H1 (cell line): ENCODE measurements at regions of chr11 and their contacts with region 1.

Region 1: DNA sequence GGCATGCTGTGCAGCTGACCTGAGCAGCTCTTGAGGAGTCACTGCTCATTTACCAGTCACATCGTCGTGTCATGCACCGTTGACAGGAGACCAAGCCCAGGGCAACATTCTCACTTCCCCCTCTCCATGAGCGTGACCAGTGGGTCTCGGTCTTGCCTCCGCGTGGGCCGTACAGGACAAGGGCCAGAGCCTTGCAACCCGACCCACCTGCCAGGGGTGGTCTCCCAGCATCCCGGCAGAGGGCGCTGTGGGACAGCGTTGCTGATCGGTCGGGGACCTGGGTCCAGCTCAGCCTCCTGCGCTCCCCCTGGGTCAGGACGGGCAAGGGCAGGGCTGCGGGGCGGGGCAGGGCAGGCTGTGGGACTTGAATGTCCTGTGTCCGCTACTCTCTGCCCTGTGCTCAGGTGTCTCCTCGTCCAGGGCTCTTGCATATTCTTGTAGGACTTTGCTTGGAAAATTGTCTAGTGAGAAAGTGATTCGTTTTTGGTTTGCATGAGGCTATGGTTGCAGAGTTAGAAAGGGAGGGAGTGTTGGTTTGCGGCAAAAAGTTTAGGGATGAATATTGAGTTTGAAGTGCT is 16.2 kb downstream of the EIF4G2 start:
- DNase-seq: peak; percentile 77 to 99
- H3K4me3 ChIP-seq: no peak overlapping the region
- H3K27ac ChIP-seq: no peak overlapping the region
- H3K4me1 ChIP-seq: peaks cover 0 to 5% (median 2%) of the 10 kb centered on the region in 4 experiments; a peak in 2 of 7 replicates
- H3K27me3 ChIP-seq: peaks cover 0 to 2% (median 0%) of the 10 kb centered on the region in 4 experiments; a peak in 2 of 7 replicates
- CTCF ChIP-seq: peak; percentile 98 to 99 (median 98)
- EP300 ChIP-seq: no peak
- POLR2A ChIP-seq: no peak
- RAD21 ChIP-seq: peak; percentile 95 to 97

Region 2: DNA sequence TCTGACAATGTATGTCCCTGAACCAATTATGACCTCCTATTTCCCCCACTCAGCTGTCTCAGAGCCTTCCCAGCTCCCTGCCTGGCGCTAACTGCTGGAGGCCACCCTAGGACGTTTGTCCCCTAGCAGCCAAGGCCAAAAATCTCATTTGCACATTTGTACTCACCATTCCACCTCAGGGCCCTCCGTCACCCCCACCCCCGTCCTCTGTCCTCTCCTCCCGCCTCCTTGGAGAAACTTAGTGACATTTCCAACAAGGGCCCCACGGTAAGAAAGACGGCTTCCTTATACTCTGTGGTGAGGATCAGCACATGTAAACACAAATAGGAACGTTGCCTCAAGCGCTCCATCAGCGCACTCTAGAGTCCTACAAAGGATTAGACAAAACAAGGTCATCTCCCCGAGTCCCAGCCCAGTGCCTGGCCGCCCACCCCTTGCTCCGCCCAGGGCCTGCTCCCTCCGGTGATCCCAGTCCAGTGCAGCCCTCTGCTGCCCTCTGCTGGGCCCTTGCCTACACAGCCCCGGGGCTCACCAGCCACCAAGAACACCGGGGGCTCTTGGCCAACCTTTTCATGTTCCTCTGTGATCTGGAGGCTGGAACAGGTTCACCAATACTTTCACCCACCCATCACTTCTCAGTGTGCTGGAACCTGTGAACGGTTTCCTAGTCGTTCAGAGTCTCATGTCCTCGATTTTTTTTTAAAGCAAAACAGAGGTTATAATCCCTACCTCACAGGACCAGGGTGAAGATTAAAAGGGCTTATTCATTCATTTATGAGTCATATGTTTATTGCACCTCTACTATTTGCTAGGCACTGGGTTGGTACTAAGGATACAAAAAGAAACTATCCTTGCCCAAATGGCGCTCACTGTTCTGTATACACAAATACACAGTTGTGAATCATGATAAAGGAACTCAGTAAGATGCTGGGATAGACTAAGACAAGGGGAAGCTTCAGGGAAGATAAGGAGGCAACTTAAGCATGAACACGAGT is 56.7 kb before region 1 on chr11:
- CTCF ChIA-PET with region 1: no interaction called
- POLR2A ChIA-PET with region 1: no interaction called
- DNase-seq: peak; percentile 90 to 98
- H3K4me3 ChIP-seq: peak overlapping the region in 1 of 4 experiments; percentile 47; a peak in 4 of 8 replicates
- H3K27ac ChIP-seq: no peak overlapping the region
- H3K4me1 ChIP-seq: peaks cover 0 to 4% (median 3%) of the 10 kb centered on the region in 4 experiments; a peak in 4 of 7 replicates
- H3K27me3 ChIP-seq: no peaks in the 10 kb centered on the region; a peak in 1 of 7 replicates
- CTCF ChIP-seq: peak; percentile 85 to 95 (median 93)
- EP300 ChIP-seq: no peak; a peak in 1 of 3 replicates
- POLR2A ChIP-seq: 0 out of 3 replicates have a peak, but pooled peaks of 1 of the 2 experiments have one; percentile 23
- RAD21 ChIP-seq: peak; percentile 99

Region 3: GRCh38 chr11:10803676-10804075 is 11.2 kb after region 1 on chr11:
- CTCF ChIA-PET with region 1: interaction called, 19 read pairs
- POLR2A ChIA-PET with region 1: interaction called, 595 read pairs
- DNase-seq: no peak
- H3K4me3 ChIP-seq: no peak overlapping the region
- H3K27ac ChIP-seq: no peak overlapping the region
- H3K4me1 ChIP-seq: peaks cover 0 to 2% (median 0%) of the 10 kb centered on the region in 4 experiments; a peak in 2 of 7 replicates
- H3K27me3 ChIP-seq: no peaks in the 10 kb centered on the region
- CTCF ChIP-seq: no peak
- EP300 ChIP-seq: no peak
- POLR2A ChIP-seq: no peak
- RAD21 ChIP-seq: no peak

Region 4: DNA sequence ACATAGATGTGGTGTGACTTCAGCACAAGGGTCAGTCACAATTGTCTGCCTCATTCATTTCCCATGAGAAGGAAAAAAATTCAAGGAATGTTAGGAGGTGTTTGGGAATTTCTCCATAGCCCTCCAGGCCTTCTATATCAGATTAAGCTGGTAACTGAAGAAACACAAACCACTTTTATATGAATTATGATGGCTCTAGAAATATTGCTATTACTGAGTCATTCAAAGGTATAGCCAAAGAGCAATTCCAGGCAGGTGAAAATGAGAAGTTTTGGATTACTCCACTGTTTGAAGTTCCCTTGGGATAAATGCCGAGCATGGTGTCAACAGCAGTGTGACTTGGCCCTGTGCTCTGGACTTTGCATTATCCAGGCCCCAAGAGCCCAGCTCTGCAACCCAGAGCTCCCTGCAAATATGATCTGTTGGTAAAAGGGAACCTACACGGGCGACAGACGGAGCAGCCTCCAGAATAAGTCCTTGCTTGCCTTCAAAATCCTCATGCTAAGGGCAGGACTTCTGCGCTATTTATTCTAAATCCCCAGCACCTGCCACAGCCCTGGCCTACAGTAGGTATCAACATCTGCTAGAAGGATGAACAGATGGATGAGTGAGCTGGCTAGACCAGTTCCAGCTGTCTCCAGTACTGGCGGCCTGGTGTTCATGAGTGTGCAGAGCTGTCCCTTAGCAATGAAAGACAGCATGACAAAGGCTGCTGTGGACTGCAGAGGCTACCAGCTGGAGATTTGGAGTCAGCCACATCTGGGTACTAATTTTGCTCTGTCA is 132.8 kb after region 1 on chr11:
- CTCF ChIA-PET with region 1: interaction called, 12 read pairs
- POLR2A ChIA-PET with region 1: interaction called, 11 read pairs
- DNase-seq: no peak
- H3K4me3 ChIP-seq: no peak overlapping the region
- H3K27ac ChIP-seq: no peak overlapping the region
- H3K4me1 ChIP-seq: peaks cover 0 to 5% (median 1%) of the 10 kb centered on the region in 4 experiments; a peak in 3 of 7 replicates
- H3K27me3 ChIP-seq: peaks cover 0 to 7% (median 6%) of the 10 kb centered on the region in 4 experiments; a peak in 5 of 7 replicates
- CTCF ChIP-seq: no peak
- EP300 ChIP-seq: no peak
- POLR2A ChIP-seq: no peak
- RAD21 ChIP-seq: no peak

Region 5: DNA sequence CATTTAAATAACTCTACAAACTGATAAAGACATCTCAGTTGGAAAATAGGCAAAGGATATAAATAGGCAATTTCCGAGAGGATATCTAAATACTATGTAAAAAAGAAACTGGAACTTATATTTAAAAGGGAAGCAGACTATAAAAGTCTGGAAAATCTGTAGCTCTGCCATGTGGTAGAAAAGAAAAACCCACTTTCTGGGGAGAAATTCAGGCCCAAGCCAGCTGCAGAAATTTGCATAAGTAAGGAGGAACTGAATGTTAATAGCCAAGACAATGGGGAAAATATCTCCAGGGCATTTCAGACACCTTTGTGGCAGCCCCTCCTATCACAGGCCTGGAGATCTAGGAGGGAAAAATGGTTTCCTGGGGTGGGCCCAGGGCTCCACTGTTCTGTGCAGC is 163.1 kb after region 1 on chr11:
- CTCF ChIA-PET with region 1: no interaction called
- POLR2A ChIA-PET with region 1: no interaction called
- DNase-seq: no peak
- H3K4me3 ChIP-seq: no peak overlapping the region
- H3K27ac ChIP-seq: no peak overlapping the region
- H3K4me1 ChIP-seq: no peaks in the 10 kb centered on the region
- H3K27me3 ChIP-seq: no peaks in the 10 kb centered on the region
- CTCF ChIP-seq: no peak
- EP300 ChIP-seq: no peak
- POLR2A ChIP-seq: no peak
- RAD21 ChIP-seq: no peak

Region 6: GRCh38 chr11:11010624-11011127 is 218.2 kb after region 1 on chr11:
- CTCF ChIA-PET with region 1: interaction called, 12 read pairs
- POLR2A ChIA-PET with region 1: interaction called, 3 read pairs
- DNase-seq: no peak
- H3K4me3 ChIP-seq: no peak overlapping the region
- H3K27ac ChIP-seq: no peak overlapping the region
- H3K4me1 ChIP-seq: peaks cover 3 to 8% (median 5%) of the 10 kb centered on the region in 4 experiments; a peak in 5 of 7 replicates
- H3K27me3 ChIP-seq: no peaks in the 10 kb centered on the region; a peak in 2 of 7 replicates
- CTCF ChIP-seq: peak; percentile 16 to 61 (median 47)
- EP300 ChIP-seq: no peak
- POLR2A ChIP-seq: no peak
- RAD21 ChIP-seq: peak; percentile 34 to 55; a peak in 3 of 4 replicates